Uterus (tissue), 4 donors: ENCODE measurements at regions of chr14 and their contacts with region 1.

Region 1: GRCh38 chr14:34099635-34100034 is 148.8 kb upstream of the EGLN3 start:
- DNase-seq: no peak
- H3K4me3 ChIP-seq: no peak overlapping the region
- H3K27ac ChIP-seq: no peak overlapping the region
- H3K4me1 ChIP-seq: no peaks in the 10 kb centered on the region
- H3K27me3 ChIP-seq: no peaks in the 10 kb centered on the region
- CTCF ChIP-seq: no peak
- POLR2A ChIP-seq: no peak

Region 2: DNA sequence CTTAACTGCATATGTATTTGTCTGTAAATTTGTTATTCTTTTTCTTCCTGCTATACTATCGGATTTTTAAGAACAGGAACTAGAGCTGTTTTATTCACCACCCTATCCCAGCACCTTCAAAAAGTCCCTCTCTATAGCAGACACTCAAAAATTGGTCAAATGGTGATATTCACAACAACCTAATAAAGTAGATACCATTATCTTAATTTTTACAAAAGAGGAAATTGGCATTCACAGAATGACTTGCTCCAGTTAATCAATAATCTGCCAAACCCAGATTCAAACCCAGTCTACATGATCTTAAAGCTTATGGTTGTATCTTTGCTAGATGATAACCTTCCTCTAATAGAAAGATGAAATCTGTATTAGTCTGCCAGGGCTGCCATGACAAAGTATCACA is 575.4 kb before region 1 on chr14:
- intact Hi-C with region 1: no loop called
- DNase-seq: no peak
- H3K4me3 ChIP-seq: no peak overlapping the region
- H3K27ac ChIP-seq: no peak overlapping the region
- H3K4me1 ChIP-seq: no peaks in the 10 kb centered on the region
- H3K27me3 ChIP-seq: no peaks in the 10 kb centered on the region
- CTCF ChIP-seq: no peak
- POLR2A ChIP-seq: no peak

Region 3: DNA sequence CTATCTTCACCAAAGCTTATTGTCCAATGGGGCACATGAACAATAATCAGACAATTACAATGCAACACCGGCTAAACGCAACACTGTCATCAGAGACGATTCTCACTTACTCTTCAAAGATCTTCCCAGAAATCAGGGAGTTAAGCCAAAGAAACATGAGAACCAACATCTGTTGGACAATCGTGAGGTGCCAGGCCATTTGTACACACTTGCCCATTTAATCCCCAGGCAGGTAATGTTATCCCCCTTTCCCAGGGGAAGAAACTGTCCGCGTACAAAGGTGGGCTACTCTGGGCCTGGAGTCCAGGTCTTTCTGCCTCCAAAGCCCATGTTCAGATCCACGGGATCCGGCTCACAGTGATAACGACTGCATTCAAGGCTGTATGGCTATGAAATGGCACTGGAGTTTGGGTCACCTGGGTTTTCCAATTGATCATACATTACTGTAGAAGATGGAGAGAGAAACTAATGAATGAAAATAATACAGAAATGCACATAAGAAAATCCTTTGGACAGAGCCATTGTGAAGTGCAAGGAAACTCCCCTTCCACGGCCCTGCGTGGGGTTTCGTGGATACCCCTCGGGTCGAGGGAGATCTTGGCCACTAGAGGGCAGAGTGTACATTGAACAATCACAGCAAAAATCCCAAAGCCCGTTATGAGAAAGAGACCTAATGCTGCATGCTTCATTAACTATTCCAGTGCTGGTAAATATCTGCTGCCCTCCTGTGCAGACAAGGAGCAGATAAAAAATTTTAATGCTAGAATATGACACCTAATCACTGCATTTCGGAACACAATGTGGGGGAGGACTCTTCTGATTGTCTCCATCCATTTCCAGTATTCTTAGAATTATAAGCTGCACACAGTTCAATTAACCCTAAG is 260.2 kb before region 1 on chr14:
- intact Hi-C with region 1: loop called (anchors 5 kb)
- DNase-seq: peak; percentile 53 to 62
- H3K4me3 ChIP-seq: no peak overlapping the region
- H3K27ac ChIP-seq: no peak overlapping the region
- H3K4me1 ChIP-seq: no peaks in the 10 kb centered on the region
- H3K27me3 ChIP-seq: no peaks in the 10 kb centered on the region
- CTCF ChIP-seq: peak; percentile 74 to 81 (median 78)
- POLR2A ChIP-seq: no peak